Activated naive CD4-positive, alpha-beta T cell treated with anti-CD3 and anti-CD28 coated beads, Interleukin-2, amount 10 ng/mL, durations not matched to agents 7 days and 5 days (primary cell): ENCODE measurements at regions of chr1 and their contacts with region 1.

Region 1: DNA sequence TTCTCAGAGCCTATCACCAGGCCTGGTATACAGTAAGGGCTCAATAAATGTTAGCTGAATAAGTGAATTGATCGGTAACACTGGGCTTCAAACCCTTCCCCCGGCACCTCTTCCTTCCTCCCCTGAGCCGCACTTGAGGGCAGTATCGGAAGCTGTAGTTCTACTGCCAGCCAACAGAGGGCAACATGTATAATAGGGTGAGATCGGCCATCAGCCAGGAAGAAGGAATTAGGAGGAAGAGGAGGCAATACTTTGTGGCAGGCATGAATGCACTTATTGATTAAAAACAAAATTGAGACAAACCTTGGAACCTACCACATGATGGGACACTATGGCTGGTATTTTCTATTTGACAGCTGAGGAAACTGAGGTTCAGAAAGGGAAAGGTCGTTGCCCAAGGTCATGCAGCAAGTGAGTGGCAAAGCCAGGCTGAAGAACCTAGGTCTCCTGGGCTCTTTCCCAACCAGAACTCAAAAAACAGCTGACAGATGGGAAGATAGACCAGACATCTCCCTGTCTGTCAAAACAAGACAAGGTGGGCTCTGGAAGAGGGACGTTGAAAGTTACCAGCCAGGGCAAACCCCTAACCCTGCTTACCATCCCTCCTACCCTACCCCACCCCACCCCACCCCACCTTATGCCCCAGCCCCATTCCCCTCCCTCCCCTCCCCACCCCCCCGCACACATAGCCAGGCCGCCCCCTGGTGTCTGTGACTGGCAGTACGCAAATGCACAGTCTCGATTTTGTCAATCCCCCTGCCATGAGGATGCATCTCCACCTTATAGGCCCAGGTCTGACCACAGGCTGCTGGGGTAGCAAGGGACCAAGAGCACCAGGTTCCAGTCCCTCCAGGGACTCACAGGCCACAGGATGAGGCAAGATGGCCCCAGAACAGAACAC is 107.3 kb upstream of the RUNX3 start:
- DNase-seq: peak; percentile 78
- H3K4me3 Mint-ChIP-seq: no peak overlapping the region
- H3K27ac Mint-ChIP-seq: peak overlapping the region; percentile 1
- H3K4me1 Mint-ChIP-seq: peaks cover 37% of the 10 kb centered on the region
- H3K27me3 Mint-ChIP-seq: peaks cover 32% of the 10 kb centered on the region

Region 2: GRCh38 chr1:24847995-24848881 is 189.2 kb before region 1 on chr1:
- CTCF ChIA-PET with region 1: interaction called, 44 read pairs
- DNase-seq: peak; percentile 92
- H3K4me3 Mint-ChIP-seq: peak overlapping the region; percentile 64
- H3K27ac Mint-ChIP-seq: peak overlapping the region; percentile 74
- H3K4me1 Mint-ChIP-seq: peaks cover 22% of the 10 kb centered on the region
- H3K27me3 Mint-ChIP-seq: peaks cover 48% of the 10 kb centered on the region

Region 3: DNA sequence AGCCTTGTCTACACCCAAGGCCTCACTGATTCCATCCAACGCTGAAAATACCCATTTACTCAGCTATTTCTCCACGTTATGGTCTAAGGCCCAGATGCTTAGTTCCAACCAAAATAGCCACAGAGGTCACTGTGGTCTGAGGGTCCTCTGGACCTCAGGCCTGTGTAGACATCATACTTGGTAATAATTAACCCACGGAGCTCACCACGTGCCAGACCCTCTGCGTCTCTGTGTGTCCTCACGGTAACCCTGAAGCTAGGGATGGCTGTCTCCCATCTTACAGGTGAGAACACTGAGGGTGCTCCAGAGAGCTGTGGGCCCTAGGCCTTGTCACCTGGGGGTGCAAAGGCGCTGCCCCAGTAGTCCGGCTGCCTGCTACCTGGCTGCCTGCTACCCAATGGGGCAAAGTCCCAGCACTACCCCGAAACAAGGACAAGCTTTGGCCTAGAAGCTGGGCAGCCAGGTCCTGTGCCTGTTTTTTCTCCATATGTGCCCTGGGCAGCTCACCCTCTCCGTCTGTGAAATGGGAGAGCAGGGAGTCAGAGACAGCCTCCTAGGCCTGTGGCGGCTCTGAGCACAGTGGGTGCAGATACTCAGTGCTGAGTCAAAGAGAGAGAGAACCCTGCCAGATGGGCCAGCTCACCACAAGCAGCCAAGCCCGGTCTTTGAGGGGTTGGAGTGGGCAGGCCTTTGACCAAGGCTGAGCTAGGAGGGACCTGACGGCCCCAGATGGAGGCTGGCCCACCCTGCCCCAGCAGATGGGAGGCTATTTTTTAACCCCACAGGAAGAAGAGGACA is 90.4 kb before region 1 on chr1:
- CTCF ChIA-PET with region 1: interaction called, 21 read pairs
- DNase-seq: no peak
- H3K4me3 Mint-ChIP-seq: no peak overlapping the region
- H3K27ac Mint-ChIP-seq: peak overlapping the region; percentile 37
- H3K4me1 Mint-ChIP-seq: peaks cover 77% of the 10 kb centered on the region
- H3K27me3 Mint-ChIP-seq: no peaks in the 10 kb centered on the region

Region 4: GRCh38 chr1:24964811-24965570 is 72.4 kb before region 1 on chr1:
- CTCF ChIA-PET with region 1: interaction called, 190 read pairs
- DNase-seq: peak; percentile 97
- H3K4me3 Mint-ChIP-seq: peak overlapping the region; percentile 96
- H3K27ac Mint-ChIP-seq: peak overlapping the region; percentile 91
- H3K4me1 Mint-ChIP-seq: peaks cover 84% of the 10 kb centered on the region
- H3K27me3 Mint-ChIP-seq: no peaks in the 10 kb centered on the region

Region 5: GRCh38 chr1:25011943-25012638 is 25.3 kb before region 1 on chr1:
- CTCF ChIA-PET with region 1: interaction called, 15 read pairs
- DNase-seq: no peak
- H3K4me3 Mint-ChIP-seq: no peak overlapping the region
- H3K27ac Mint-ChIP-seq: no peak overlapping the region
- H3K4me1 Mint-ChIP-seq: peaks cover 63% of the 10 kb centered on the region
- H3K27me3 Mint-ChIP-seq: no peaks in the 10 kb centered on the region

Region 6: DNA sequence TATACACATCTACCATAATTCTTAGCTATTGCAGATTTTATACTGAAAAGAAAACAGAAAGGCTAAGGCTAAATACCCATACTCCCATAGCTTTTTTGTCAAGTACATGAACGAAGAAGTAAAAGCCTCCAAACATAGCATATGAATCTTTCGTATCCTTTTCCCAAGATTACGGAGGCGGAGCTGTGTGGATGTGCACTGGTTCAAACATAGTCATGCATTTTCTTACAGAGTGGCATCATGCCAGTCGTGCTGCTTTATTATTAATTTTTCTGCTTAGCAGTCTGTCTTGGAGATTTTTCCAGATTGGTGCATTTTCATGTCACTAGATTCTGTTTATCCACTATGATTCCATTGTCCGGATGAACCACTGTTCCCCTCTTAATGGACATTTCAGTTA is 11.3 kb after region 1 on chr1:
- CTCF ChIA-PET with region 1: interaction called, 10 read pairs
- DNase-seq: no peak
- H3K4me3 Mint-ChIP-seq: no peak overlapping the region
- H3K27ac Mint-ChIP-seq: no peak overlapping the region
- H3K4me1 Mint-ChIP-seq: no peaks in the 10 kb centered on the region
- H3K27me3 Mint-ChIP-seq: peaks cover 81% of the 10 kb centered on the region

Region 7: DNA sequence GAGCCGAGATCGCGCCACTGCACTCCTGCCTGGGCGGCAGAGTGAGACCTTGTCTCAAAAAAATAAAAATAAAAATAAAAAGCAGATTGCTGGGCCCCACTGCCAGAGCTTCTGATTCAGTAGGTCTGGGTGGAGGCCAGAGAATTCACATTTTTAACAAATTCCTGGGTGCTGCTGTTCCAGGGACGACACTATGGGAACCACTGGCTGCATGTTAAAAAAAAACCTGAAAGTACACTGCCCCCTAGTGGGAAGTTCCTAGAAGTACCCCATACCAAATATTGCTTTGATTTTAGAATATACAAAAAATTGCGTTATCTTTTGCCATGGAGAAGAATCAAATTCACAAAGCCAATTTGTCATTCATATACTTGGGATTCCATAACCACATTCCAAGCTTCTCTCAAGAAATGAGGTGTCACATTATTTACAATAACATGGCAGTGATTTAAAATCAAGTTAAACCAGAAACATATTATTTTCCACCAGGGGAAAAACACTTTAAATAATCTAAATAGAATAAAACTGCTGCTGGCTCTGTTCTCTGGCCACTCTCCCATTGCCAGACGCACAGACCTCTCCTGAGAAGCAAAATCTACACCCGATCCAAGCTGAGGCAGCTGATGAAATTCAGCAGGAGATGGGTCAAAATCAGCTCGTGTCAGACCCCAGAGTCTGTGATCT is 167.5 kb after region 1 on chr1:
- CTCF ChIA-PET with region 1: interaction called, 10 read pairs
- DNase-seq: peak; percentile 22
- H3K4me3 Mint-ChIP-seq: no peak overlapping the region
- H3K27ac Mint-ChIP-seq: no peak overlapping the region
- H3K4me1 Mint-ChIP-seq: no peaks in the 10 kb centered on the region
- H3K27me3 Mint-ChIP-seq: peaks cover 64% of the 10 kb centered on the region